Mammary epithelial cell (primary cell): ENCODE measurements at regions of chr2 and their contacts with region 1.

Region 1: DNA sequence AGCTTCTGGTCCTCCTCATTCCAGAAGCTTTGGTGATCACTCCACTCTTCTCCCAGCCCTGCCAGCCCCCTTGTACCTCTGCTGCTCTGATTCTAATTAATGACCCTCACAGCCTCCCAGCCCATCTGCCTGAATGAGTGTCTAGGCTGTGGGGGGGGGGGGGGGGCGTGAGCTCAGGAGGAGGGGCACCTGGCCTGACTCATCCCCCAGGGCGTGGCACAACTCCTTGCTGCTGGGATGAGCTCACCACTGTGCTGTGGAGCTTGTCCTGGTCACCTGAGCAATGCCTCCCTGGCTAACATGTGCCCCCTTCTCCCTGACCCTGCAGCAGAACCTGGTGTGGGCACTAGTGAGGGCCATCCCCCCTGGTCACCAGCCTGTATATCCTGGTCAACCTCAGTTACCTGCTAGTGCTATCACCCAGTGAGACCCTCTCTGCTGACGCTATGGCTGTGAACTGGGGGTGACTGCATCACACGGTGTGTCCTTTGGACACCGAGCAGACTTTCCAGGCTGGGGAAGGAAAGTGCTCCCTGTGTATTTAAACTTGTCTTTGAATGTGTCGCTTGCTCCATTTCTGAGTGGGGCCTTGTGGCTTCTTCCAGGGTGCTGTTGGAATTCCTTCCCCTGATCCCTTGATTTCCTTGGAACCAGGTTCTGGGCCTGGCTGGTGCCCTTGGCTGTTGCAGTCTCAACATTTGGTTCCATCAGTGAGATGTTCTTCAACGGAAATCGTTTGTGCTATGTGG is 41.5 kb upstream of the PUM2 start:
- DNase-seq: peak; percentile 75
- H3K4me3 ChIP-seq: no peak overlapping the region
- H3K27ac ChIP-seq: no peak overlapping the region
- H3K4me1 ChIP-seq: peaks cover 8% of the 10 kb centered on the region
- H3K27me3 ChIP-seq: no peaks in the 10 kb centered on the region
- CTCF ChIP-seq: no peak

Region 2: GRCh38 chr2:20411361-20411894 is 19.3 kb after region 1 on chr2:
- CTCF ChIA-PET with region 1: interaction called, 26 read pairs
- dilution Hi-C with region 1: no loop called
- in situ Hi-C with region 1: no loop called
- intact Hi-C with region 1: loop called (anchors 1 kb)
- DNase-seq: peak; percentile 72
- H3K4me3 ChIP-seq: no peak overlapping the region
- H3K27ac ChIP-seq: no peak overlapping the region
- H3K4me1 ChIP-seq: peaks cover 10% of the 10 kb centered on the region
- H3K27me3 ChIP-seq: no peaks in the 10 kb centered on the region
- CTCF ChIP-seq: peak; percentile 89 to 92

Region 3: DNA sequence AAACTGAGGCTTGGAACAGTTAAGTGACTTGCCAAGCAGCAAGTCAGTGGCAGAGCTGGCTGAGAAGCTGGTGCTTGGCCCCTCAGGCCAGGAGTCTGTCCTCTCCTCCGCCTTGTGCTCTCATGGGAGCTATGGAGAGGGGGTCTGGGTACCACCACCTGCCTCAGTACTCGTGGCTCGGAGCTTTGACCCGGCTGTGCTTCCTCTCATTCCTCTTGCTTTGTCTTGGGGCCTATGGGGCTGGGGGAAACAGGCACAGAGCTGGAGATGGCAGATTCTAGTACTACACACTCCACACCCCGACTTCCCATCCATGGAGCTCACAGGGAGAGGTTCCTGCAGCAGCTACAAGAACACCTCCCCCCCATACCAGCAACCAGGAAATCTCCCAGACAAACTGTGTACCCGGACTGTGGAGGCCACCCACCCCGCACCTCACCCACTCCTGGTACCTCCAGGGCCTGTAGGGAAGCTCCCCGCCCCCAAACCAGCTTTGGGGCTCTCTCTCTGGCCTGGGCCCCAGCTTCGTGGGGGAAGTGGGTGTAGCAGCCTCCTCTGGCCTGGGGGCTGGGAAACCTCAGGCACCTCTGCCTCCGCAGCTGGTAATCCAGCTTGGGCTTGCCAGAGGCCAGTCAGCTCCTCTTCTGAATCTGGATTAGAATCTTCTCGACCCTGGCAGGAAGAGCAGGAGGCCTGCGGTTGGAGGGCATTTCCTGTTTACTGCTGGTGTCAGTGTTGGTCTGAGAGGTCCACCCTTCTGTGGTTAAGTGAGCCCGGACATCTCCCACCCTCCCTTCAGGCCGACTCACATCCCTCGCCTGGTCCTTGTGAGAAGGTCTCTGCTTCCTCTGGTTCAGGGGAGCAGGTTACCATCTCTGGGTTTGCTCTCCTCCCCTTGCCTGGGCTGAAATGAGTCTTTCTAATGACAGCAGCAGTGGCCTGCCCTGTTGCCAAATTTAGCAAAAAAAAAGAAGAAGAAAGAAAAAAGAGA is 32.5 kb after region 1 on chr2:
- CTCF ChIA-PET with region 1: interaction called, 11 read pairs
- dilution Hi-C with region 1: no loop called
- in situ Hi-C with region 1: no loop called
- intact Hi-C with region 1: loop called (anchors 1 kb)
- DNase-seq: peak; percentile 51
- H3K4me3 ChIP-seq: no peak overlapping the region
- H3K27ac ChIP-seq: no peak overlapping the region
- H3K4me1 ChIP-seq: peaks cover 41% of the 10 kb centered on the region
- H3K27me3 ChIP-seq: no peaks in the 10 kb centered on the region
- CTCF ChIP-seq: no peak

Region 4: GRCh38 chr2:20635675-20636584 is 243.8 kb after region 1 on chr2:
- CTCF ChIA-PET with region 1: interaction called, 5 read pairs
- dilution Hi-C with region 1: no loop called
- in situ Hi-C with region 1: loop called in 1 of 2 experiments (anchors 5 kb)
- intact Hi-C with region 1: loop called (anchors 1 kb)
- DNase-seq: peak; percentile 30
- H3K4me3 ChIP-seq: no peak overlapping the region
- H3K27ac ChIP-seq: no peak overlapping the region
- H3K4me1 ChIP-seq: peaks cover 23% of the 10 kb centered on the region
- H3K27me3 ChIP-seq: no peaks in the 10 kb centered on the region
- CTCF ChIP-seq: peak; percentile 94 to 96

Region 5: DNA sequence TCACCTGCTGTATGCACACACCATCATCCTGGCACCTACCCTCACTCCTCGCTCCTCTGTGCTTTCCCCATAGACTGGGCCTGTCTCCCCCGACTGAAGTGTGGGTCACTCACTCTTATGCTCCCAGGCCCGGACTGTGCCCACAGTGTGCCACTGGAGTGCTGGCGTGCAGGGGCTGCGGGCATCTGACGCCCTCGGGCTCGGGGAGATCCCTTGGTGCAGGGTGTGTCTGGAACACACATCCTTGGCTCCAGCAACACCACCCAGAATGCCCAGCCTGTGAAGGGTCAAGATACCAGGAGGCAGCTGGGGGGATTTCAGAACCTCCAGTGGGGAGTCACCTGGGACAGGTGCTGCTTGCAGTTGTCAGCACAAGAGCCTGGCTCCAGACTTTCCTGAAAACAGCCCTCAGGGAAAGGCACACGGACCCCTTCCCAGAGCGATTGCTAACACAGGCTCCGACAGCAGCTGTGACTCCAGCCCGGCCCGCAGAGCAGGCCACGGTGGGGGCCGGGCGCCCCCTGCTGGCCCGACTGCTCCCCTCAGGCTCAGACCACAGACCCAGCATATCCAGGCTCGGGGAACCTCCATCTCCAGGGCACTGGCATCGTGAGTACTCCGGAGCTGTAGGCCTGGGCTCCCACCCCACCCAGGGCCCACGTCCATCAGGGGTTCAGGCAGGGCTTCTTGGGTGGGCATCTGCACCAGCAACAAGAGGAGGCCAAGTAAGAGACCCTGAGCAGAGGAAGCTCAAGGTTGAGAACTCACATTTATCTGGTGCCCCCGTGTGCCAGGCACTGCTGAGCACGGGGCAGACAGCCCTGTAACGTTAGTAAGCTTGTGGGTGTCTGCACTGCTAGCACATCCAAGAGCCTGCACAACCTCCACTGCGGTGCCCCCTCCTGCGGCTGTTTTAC is 250.2 kb after region 1 on chr2:
- CTCF ChIA-PET with region 1: no interaction called
- dilution Hi-C with region 1: no loop called
- in situ Hi-C with region 1: loop called in 1 of 2 experiments (anchors 5 kb)
- intact Hi-C with region 1: loop called (anchors 1 kb)
- DNase-seq: peak; percentile 62
- H3K4me3 ChIP-seq: no peak overlapping the region
- H3K27ac ChIP-seq: no peak overlapping the region
- H3K4me1 ChIP-seq: peaks cover 10% of the 10 kb centered on the region
- H3K27me3 ChIP-seq: no peaks in the 10 kb centered on the region
- CTCF ChIP-seq: peak; percentile 79 to 95

Region 6: DNA sequence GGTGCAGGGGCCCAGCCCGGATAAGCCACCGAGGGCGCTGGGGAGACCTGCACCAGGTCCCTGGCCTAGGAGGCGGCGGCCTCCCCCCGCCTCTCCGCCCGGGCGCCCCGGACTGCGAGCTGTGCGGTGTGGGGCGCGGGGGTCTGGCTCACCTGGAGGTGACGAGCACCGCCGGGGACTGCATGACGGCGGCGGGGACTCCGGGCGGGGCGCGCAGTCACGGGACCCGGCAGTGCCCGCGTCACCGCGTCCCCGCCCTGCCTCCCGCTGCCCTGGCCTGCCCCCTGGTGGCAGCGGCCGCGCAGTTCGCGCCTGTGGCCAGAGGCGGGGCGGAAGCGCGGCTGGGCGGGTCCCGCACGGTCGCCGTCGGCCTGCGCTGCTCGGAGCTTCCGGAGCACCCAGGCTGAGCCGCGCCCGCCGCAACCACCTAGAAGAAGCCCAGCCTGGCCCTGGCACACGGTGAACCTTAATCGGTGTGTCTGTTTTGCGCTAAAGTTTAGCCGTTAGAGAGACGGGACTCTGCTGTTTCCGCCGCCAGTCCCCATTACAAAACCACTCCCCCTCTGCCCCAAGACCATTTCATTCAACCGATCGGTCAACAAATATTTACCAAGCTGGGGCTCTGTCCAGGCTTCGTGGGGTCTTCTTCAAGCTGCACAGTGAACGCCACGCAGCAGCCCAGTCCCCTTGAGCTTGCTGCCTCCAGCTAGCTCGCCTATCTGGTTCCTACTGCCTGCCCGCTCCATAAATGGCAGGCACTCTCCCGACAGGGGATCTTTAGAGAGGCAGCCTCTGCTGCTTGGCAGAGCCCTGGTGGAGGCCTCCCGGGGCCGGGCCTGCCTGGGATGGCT is 259.0 kb after region 1 on chr2 and contains the start of gene HS1BP3:
- CTCF ChIA-PET with region 1: interaction called, 3 read pairs
- dilution Hi-C with region 1: no loop called
- in situ Hi-C with region 1: no loop called
- intact Hi-C with region 1: loop called (anchors 1 kb)
- DNase-seq: peak; percentile 81
- H3K4me3 ChIP-seq: peak within 1 kb of the TSS; percentile 86 to 99 (median 91)
- H3K27ac ChIP-seq: peak within 1 kb of the TSS; percentile 92
- H3K4me1 ChIP-seq: peaks cover 17% of the 10 kb centered on the region
- H3K27me3 ChIP-seq: no peaks in the 10 kb centered on the region
- CTCF ChIP-seq: peak; percentile 65 to 70
- total RNA-seq, gene HS1BP3: 20.5 to 26.5 TPM